ENCODE measurements at regions of chr13 and their contacts with region 1.

Region 1: DNA sequence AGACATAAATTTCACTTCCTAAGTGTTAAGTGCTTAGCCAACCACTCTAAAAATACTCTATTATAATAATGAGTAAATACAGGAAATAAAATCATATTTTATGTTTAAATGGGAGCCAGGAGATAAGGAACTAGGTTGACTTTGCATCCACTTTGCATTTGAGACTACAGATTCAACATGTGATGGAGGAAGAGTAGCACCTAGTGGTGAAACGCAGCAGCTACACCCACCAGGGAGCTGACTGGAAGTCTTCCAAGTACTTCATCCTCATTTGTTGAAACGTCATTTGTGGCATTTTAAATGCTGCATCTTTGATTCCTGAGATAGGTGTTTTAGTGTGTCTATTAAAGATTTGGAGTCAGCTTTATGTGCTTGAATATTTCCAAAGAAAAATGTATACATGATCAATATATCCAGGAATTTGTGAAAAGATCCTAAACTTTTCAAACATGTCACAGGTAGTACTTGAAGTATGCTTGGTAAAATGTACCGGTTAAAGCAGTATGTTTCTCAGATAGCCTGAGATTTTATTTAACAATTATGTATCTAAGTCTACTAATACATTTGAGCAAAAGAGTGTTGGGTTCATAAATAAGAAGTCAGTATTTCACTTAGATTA is 17.4 kb upstream of the KCTD12 start:
- DNase-seq: peak; percentile 50
- H3K4me3 Mint-ChIP-seq: no peak overlapping the region
- H3K27ac Mint-ChIP-seq: no peak overlapping the region
- H3K4me1 Mint-ChIP-seq: no peaks in the 10 kb centered on the region
- H3K27me3 Mint-ChIP-seq: peaks cover 21% of the 10 kb centered on the region

Region 2: GRCh38 chr13:76473552-76474134 is 430.0 kb before region 1 on chr13:
- intact Hi-C with region 1: loop called (anchors 10 kb)
- DNase-seq: peak; percentile 45
- H3K4me3 Mint-ChIP-seq: no peak overlapping the region
- H3K27ac Mint-ChIP-seq: no peak overlapping the region
- H3K4me1 Mint-ChIP-seq: no peaks in the 10 kb centered on the region
- H3K27me3 Mint-ChIP-seq: peaks cover 3% of the 10 kb centered on the region

Region 3: DNA sequence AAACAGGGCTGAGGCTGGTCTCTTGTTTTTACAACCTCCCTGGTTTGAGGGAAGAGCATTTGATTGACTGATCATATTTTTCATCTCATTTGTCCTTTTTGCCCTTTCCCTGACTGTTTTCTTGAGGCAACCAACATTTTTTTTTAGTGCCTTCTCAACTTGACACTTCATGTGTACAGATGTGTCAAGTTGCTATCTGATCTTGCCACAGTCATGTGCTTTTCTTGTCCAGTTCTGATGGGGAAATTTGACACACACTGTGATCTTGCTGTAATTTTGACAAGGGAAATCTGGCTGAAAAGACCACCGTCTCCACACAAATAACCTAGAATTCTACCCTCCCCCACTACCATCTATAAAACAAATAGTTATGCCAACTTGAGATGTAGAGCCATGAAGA is 347.0 kb before region 1 on chr13:
- intact Hi-C with region 1: no loop called
- DNase-seq: no peak
- H3K4me3 Mint-ChIP-seq: no peak overlapping the region
- H3K27ac Mint-ChIP-seq: no peak overlapping the region
- H3K4me1 Mint-ChIP-seq: no peaks in the 10 kb centered on the region
- H3K27me3 Mint-ChIP-seq: no peaks in the 10 kb centered on the region

Region 4: GRCh38 chr13:76667551-76667950 is 236.1 kb before region 1 on chr13:
- intact Hi-C with region 1: loop called (anchors 10 kb)
- DNase-seq: no peak
- H3K4me3 Mint-ChIP-seq: no peak overlapping the region
- H3K27ac Mint-ChIP-seq: no peak overlapping the region
- H3K4me1 Mint-ChIP-seq: no peaks in the 10 kb centered on the region
- H3K27me3 Mint-ChIP-seq: peaks cover 5% of the 10 kb centered on the region

Region 5: GRCh38 chr13:76822698-76823267 is 80.9 kb before region 1 on chr13:
- intact Hi-C with region 1: loop called (anchors 2 kb)
- DNase-seq: no peak
- H3K4me3 Mint-ChIP-seq: no peak overlapping the region
- H3K27ac Mint-ChIP-seq: no peak overlapping the region
- H3K4me1 Mint-ChIP-seq: no peaks in the 10 kb centered on the region
- H3K27me3 Mint-ChIP-seq: peaks cover 4% of the 10 kb centered on the region